ENCODE measurements at regions of chr15 and their contacts with region 1.

Region 1: GRCh38 chr15:39852250-39852649 is 67.8 kb downstream of the GPR176 start:
- DNase-seq: no peak
- ATAC-seq: peak; percentile 60 to 73

Region 2: GRCh38 chr15:39801641-39802309 is 50.5 kb before region 1 on chr15:
- intact Hi-C with region 1: loop called in 1 of 2 experiments (anchors 10 kb)
- DNase-seq: no peak
- ATAC-seq: no peak

Region 3: GRCh38 chr15:40160689-40161688 is 308.7 kb after region 1 on chr15 and contains the start of gene BUB1B:
- intact Hi-C with region 1: no loop called
- DNase-seq: peak; percentile 94
- ATAC-seq: peak; percentile 99
- total RNA-seq, gene BUB1B: 0.71 to 1.3 TPM